ENCODE measurements at regions of chr5 and their contacts with region 1.

Region 1: DNA sequence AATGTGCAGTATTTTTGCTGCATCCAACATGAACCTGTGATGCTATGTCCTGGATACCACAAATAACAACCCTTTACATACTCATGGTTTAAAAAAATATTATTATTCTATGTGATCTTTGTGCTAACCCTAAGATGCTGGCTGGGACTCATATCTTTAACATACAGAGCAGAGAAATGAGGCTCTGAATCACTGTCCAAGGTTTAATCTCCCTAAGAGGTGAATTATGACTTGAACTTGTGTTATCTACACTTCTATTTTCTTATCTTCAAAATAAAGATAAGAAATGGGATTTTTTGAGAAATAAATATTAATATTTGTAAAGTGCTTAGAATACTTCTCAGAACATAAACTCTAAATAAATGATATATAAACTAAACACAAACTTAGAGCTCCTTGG is 68.8 kb upstream of the GRIA1 start:
- DNase-seq: no peak
- ATAC-seq: no peak
- H3K4me3 ChIP-seq: no peak overlapping the region
- H3K27ac ChIP-seq: no peak overlapping the region
- H3K4me1 ChIP-seq: no peaks in the 10 kb centered on the region
- H3K27me3 ChIP-seq: no peaks in the 10 kb centered on the region
- CTCF ChIP-seq: no peak
- EP300 ChIP-seq: no peak
- POLR2A ChIP-seq: no peak
- RAD21 ChIP-seq: no peak

Region 2: GRCh38 chr5:153276151-153276550 is 145.5 kb before region 1 on chr5:
- CTCF ChIA-PET with region 1: no interaction called
- POLR2A ChIA-PET with region 1: no interaction called
- in situ Hi-C with region 1: no loop called
- intact Hi-C with region 1: no loop called
- DNase-seq: peak; percentile 2
- ATAC-seq: no peak
- H3K4me3 ChIP-seq: no peak overlapping the region
- H3K27ac ChIP-seq: no peak overlapping the region
- H3K4me1 ChIP-seq: no peaks in the 10 kb centered on the region
- H3K27me3 ChIP-seq: no peaks in the 10 kb centered on the region
- CTCF ChIP-seq: no peak
- EP300 ChIP-seq: no peak
- POLR2A ChIP-seq: no peak
- RAD21 ChIP-seq: no peak

Region 3: DNA sequence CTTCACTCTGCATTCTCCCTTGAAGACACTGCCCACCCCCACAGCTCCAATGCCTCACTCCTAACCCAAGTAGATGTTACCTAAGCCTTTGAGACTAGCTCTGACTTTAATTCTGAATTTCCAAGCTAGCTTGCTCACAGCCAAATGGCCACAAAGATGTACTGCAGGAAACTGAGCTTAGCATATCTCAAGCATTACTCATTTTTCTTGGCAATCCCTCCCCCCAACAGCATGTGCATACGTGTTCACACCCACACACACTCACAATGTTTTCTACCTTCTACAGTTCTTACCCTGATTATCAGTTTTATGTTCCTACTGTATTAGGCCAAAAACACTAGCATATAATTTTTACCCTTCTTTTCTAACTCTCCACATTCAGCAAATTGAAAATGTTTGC is 55.1 kb after region 1 on chr5:
- CTCF ChIA-PET with region 1: no interaction called
- POLR2A ChIA-PET with region 1: no interaction called
- in situ Hi-C with region 1: no loop called
- intact Hi-C with region 1: loop called (anchors 2 kb)
- DNase-seq: no peak
- ATAC-seq: no peak
- H3K4me3 ChIP-seq: no peak overlapping the region
- H3K27ac ChIP-seq: no peak overlapping the region
- H3K4me1 ChIP-seq: no peaks in the 10 kb centered on the region
- H3K27me3 ChIP-seq: no peaks in the 10 kb centered on the region
- CTCF ChIP-seq: no peak
- EP300 ChIP-seq: no peak
- POLR2A ChIP-seq: no peak
- RAD21 ChIP-seq: no peak